ENCODE measurements at regions of chr4 and their contacts with region 1.

Region 1: DNA sequence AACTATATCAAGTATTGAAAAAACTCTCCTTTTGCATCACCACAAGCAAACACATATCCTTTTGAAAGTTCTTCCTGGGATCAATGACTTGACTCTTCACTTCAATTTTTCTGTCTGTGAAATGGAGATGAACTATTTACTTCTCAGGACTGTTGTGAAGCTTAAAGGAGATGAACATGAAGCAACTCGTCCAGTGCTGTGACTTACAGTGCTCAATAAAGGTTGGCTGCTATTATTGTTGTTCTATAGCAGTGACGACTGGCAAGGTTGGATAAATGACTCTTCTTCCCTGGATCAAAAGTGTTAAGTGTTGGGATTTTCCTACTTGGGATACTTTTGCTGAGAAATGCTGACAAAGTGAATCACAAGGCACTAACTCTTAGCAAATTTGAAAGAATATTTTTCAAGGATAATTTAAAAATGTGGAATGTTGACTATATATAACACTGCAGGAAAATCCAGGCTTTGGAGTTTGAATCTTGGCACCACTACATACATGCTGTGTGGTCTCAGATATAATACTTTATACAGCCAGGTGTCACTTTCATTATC is 13.7 kb downstream of the FRAS1 start:
- DNase-seq: no peak
- H3K4me3 ChIP-seq: no peak overlapping the region
- H3K27ac ChIP-seq: no peak overlapping the region
- H3K4me1 ChIP-seq: no peaks in the 10 kb centered on the region
- H3K27me3 ChIP-seq: peaks cover 0 to 8% (median 3%) of the 10 kb centered on the region in 5 experiments

Region 2: GRCh38 chr4:78059524-78059889 is 11.3 kb before region 1 on chr4:
- CTCF ChIA-PET with region 1: interaction called, 17 read pairs
- POLR2A ChIA-PET with region 1: no interaction called
- DNase-seq: peak; percentile 85 to 89 (median 89)
- H3K4me3 ChIP-seq: peak overlapping the region in 6 of 7 experiments; percentile 59 to 84 (median 75)
- H3K27ac ChIP-seq: no peak overlapping the region
- H3K4me1 ChIP-seq: peaks cover 7 to 34% (median 32%) of the 10 kb centered on the region in 4 experiments
- H3K27me3 ChIP-seq: peaks cover 0 to 52% (median 28%) of the 10 kb centered on the region in 5 experiments